Kidney (tissue), 22 donors: ENCODE measurements at regions of chr20 and their contacts with region 1.

Region 1: GRCh38 chr20:59560588-59561227 is 43.6 kb upstream of the PHACTR3 start:
- DNase-seq: peak in 3 of 5 donors; percentile 13 to 51 (median 26)
- H3K4me3 ChIP-seq: no peak overlapping the region
- H3K27ac ChIP-seq: no peak overlapping the region
- H3K4me1 ChIP-seq: no peaks in the 10 kb centered on the region
- H3K27me3 ChIP-seq: no peaks in the 10 kb centered on the region
- CTCF ChIP-seq: peak; percentile 50

Region 2: GRCh38 chr20:59751056-59751688 is 190.5 kb after region 1 on chr20:
- intact Hi-C with region 1: loop called (anchors 10 kb)
- DNase-seq: peak; percentile 76 to 90 (median 85)
- H3K4me3 ChIP-seq: no peak overlapping the region
- H3K27ac ChIP-seq: no peak overlapping the region
- H3K4me1 ChIP-seq: peaks cover 0 to 3% (median 0%) of the 10 kb centered on the region in 3 donors
- H3K27me3 ChIP-seq: no peaks in the 10 kb centered on the region
- CTCF ChIP-seq: peak; percentile 62

Region 3: DNA sequence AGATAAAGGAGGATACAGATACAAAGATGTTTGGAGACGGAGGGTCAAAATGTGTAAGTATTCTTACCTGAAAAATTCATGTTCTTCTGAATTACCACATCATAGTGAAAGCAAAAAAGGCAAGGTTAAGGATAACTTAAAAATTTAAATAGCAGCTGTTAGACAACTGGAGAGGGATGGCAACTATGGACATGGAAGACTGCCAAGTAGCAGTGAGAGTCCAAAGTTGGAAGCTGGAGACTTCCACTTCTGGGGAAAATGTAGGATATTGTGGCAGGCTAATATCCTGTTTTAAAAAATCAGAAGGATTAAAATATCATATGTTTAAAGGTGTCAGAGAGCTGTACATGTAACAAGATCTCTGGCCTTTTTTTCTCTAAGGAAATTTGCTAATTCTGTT is 342.9 kb after region 1 on chr20:
- intact Hi-C with region 1: no loop called
- DNase-seq: peak in 1 of 5 donors; percentile 6
- H3K4me3 ChIP-seq: no peak overlapping the region
- H3K27ac ChIP-seq: no peak overlapping the region
- H3K4me1 ChIP-seq: no peaks in the 10 kb centered on the region
- H3K27me3 ChIP-seq: no peaks in the 10 kb centered on the region
- CTCF ChIP-seq: no peak